ENCODE measurements at regions of chr3 and their contacts with region 1.

Region 1: DNA sequence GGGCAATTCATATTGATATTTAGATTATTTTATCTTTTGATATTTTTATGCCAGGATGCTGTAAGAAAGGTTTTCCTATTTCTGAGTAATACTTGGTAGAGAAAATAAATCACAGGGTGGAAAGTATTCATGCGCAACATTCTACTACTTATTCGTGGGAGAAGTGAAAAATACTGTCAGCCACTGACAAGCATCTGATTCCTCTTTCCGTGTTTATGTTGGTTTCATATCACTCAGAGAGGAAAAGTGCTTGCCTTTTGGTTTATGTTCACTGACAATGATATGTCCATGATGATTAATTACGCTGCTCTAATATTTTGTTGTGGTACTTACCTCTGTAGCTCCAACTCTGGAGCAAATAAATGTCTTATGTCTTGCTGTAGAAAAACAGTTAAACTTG is 429.4 kb downstream of the EDEM1 start:
- DNase-seq: no peak
- H3K4me3 Mint-ChIP-seq: no peak overlapping the region
- H3K27ac Mint-ChIP-seq: no peak overlapping the region
- H3K4me1 Mint-ChIP-seq: no peaks in the 10 kb centered on the region
- H3K27me3 Mint-ChIP-seq: no peaks in the 10 kb centered on the region

Region 2: DNA sequence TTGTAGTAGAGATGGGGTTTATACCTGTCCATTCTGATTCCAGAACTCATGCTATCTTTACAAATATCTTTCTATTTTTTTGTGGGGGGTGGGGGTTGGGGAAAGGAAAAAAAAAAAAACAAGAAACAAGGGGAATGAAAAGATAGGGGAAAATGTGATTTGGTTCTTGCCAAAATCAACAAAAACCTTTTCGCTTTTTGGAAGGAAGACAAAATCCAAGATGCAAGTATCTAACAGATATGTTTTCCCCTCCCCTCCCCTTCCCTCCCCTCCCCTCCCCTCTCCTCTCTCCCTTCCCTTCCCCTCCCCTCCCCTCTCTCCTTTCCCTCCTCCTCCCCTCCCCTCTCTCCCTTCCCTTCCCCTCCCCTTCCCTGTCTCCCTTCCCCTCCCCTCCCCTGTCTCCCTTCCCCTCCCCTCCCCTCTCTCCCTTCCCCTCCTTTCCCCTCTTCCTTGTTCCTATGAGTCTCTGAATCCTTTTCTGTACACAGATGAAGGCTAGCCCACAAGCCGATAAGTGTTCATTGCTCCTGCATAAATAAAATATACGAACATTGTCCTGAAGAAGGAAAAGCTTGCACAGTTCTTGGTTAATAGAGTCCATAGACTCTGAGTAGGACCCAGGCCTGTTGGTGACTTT is 122.5 kb after region 1 on chr3:
- CTCF ChIA-PET with region 1: no interaction called
- POLR2A ChIA-PET with region 1: no interaction called
- intact Hi-C with region 1: no loop called
- DNase-seq: no peak
- H3K4me3 Mint-ChIP-seq: no peak overlapping the region
- H3K27ac Mint-ChIP-seq: no peak overlapping the region
- H3K4me1 Mint-ChIP-seq: no peaks in the 10 kb centered on the region
- H3K27me3 Mint-ChIP-seq: no peaks in the 10 kb centered on the region

Region 3: GRCh38 chr3:6216135-6217020 is 599.5 kb after region 1 on chr3:
- CTCF ChIA-PET with region 1: no interaction called
- POLR2A ChIA-PET with region 1: no interaction called
- intact Hi-C with region 1: loop called (anchors 10 kb)
- DNase-seq: no peak
- H3K4me3 Mint-ChIP-seq: no peak overlapping the region
- H3K27ac Mint-ChIP-seq: no peak overlapping the region
- H3K4me1 Mint-ChIP-seq: no peaks in the 10 kb centered on the region
- H3K27me3 Mint-ChIP-seq: no peaks in the 10 kb centered on the region

Measured in activated CD4-positive, alpha-beta memory T cell treated with anti-CD3 and anti-CD28 coated beads for 36 hours (primary cell).